ENCODE measurements at regions of chr1 and their contacts with region 1.

Region 1: DNA sequence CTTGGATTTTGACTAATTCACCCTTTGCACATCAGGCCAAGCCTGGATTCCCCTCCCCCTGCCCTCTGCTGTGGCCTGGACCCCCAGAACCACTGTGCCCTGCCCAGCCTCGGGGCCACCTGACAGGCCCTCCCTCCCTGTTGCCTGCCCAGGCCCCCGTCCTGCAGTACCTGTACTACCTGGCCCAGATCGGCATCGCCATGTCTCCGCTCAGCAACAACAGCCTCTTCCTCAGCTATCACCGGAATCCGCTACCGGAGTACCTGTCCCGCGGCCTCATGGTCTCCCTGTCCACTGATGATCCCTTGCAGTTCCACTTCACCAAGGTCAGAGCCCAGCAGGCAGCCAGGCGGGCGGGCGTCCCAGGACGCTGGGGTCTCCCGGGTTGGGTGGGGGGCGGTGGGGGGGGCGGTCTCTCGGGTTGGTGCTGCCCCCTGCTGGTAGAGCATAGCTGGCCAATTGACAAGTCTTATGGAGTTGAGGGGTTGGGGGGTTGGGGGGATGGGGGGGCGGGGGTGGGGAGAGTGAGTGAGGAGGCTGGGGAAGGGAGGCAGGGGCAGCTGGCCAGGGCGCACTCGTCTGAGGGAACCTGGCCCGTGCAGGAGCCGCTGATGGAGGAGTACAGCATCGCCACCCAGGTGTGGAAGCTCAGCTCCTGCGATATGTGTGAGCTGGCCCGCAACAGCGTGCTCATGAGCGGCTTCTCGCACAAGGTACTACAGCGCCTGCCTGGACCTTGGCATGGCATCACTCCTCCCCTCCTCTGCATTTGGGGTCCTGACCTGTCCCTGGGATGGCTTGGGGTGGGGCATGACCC is 10.7 kb downstream of the AMPD2 start:
- DNase-seq: no peak
- CTCF ChIP-seq: peak; percentile 40

Region 2: DNA sequence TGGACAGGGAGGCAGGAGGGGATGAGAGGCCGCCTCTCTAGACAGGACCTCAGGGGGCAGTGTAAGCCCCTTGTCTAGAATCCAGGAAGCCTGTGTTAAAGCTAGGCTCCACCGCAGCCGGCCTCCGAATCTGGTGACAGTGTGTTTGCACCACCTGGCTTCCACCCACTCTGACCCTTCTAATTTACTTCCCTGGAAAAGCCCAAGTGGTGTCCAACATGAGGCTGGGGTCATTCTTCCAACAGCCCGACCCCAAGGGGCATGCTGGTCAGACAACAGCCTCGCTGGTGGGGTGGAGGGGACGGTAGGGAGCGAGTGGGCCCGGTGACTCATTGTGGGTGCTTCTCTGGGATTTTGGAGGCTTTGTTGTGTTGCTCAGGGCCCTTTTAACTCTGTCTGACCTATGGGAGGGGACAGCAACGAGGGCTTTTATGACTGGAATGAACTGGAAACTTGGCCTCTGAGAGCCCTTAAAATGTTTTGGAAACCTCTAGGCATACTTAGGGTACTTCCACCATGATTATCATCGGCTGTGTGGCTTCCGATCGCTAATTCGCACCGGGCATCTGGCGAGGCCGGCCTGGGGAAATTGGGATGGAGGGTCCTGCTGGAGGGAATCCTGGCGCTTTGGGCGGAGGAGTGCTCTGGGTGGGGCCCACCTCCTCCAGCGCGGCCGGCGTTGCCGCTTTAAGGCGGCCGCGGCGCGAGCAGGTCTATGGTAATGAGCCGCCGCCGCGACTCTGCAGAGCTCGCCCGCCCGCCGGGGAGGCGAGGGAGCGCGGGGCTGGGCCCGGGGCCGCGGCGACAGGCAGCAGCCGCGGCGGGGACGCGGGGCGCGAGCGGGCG is 381.3 kb before region 1 on chr1 and contains the start of gene CELSR2:
- in situ Hi-C with region 1: no loop called
- DNase-seq: peak; percentile 95
- CTCF ChIP-seq: no peak

Region 3: GRCh38 chr1:109438798-109439297 is 191.4 kb before region 1 on chr1:
- in situ Hi-C with region 1: no loop called
- DNase-seq: peak; percentile 40
- CTCF ChIP-seq: no peak

Region 4: DNA sequence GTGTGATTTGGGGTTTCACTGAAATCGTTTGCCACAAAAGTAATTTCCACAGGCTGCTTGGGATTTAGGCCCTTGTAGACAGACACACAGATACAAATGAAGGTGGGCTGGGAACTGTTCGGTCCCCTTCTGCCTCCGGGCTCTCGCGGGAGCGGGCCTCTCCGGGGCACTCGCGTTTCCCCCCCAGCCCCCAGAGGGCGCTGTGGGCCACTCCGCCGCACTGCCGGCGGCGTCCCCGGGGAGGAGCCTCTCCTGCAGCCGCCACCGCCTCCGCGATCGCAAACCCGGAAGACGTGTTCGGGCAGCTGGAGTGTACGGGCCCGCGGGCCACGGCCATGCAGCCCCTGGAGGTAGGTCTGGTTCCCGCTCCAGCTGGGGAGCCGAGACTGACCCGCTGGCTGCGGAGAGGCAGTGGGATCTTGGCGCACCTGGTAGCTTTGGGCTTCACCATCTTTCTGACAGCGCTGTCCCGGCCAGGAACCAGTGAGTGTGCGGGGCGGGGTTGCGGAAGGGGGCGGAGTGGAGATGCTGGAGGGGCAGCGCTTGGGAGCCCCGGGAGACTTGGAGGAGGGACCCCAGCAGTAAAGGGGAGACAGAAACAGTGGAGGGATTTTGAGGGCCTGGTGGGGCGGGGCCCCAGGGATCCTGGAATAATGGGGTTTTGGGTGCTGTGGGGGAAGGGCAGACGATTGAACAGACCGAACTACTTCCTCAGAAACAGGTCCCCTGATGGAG is 136.3 kb before region 1 on chr1 and contains the start of gene CYB561D1:
- in situ Hi-C with region 1: no loop called
- DNase-seq: peak; percentile 93
- CTCF ChIP-seq: peak; percentile 94

Region 5: GRCh38 chr1:109548321-109549267 is 81.7 kb before region 1 on chr1 and contains the start of gene GNAI3:
- in situ Hi-C with region 1: loop called (anchors 5 kb)
- DNase-seq: peak; percentile 92
- CTCF ChIP-seq: no peak

Region 6: DNA sequence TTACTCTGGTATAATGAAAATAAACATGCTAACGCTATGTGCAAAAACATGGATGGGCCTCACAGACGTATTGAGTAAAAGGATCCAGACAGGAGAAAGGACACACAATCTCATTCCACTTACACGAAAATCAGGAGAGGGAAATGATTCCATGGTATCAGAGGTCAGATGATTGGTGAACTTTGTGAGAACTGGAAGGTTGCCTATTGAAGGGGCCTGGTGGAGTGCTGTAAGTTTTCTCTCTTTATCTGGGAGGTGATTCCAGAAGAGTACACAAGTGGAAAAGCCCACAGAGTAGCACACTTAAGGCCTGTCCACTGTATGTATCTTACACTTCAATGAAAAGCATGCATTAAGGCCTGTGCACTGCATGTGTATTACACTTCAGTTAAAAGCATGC is 47.2 kb after region 1 on chr1:
- in situ Hi-C with region 1: no loop called
- DNase-seq: no peak
- CTCF ChIP-seq: no peak